ENCODE measurements at regions of chr19 and their contacts with region 1.

Region 1: DNA sequence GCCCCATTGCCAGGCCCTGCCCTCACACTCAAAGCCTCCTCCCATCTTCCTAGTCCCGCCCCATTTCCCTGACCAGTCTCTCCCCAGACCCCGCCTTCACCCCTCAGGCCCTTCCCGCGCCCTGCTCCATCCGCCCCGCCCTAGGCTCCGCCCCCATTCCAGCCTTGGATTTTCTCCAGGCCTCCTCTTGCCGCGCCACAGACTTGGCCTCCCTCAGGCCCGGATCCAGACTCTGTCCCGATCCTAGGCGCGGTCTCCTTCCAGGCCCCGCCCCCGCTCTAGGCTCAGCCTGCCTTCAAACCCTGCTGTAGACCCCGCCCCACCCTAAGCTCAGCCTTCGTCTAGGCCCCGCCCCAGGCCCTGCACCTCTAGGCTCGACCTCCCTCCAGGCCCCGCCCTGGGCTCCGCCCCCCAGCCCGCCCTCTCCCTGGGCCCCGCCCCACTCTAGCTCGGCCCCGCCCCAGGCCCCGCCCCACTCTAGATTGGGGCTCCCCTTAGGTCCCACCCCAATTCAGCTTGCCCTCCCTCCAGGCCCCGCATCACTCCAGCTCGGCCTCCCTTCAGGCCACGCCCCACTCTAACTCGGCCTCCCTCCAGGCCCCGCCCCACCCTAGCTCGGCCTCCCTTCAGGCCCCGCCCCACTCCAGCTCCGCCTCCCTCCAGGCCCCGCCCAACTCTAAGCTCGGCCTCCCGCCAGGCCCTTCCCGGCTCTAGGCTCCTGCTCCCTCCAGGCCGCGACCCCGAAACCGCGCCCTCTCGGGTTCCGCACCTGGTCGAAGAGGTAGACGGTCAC is 18.5 kb downstream of the LMTK3 start:
- DNase-seq: peak; percentile 91 to 97
- H3K4me3 ChIP-seq: peak overlapping the region; percentile 41
- H3K27ac ChIP-seq: peak overlapping the region; percentile 71 to 79
- H3K4me1 ChIP-seq: peaks cover 0 to 7% of the 10 kb centered on the region in 2 donors
- H3K27me3 ChIP-seq: no peaks in the 10 kb centered on the region
- CTCF ChIP-seq: peak in 1 of 4 experiments; percentile 13
- POLR2A ChIP-seq: peak; percentile 57 to 78

Region 2: GRCh38 chr19:48588670-48589399 is 95.7 kb after region 1 on chr19:
- intact Hi-C with region 1: loop called (anchors 10 kb)
- DNase-seq: peak; percentile 82 to 83
- H3K4me3 ChIP-seq: no peak overlapping the region
- H3K27ac ChIP-seq: no peak overlapping the region
- H3K4me1 ChIP-seq: no peaks in the 10 kb centered on the region
- H3K27me3 ChIP-seq: no peaks in the 10 kb centered on the region
- CTCF ChIP-seq: peak; percentile 77 to 90 (median 88)
- POLR2A ChIP-seq: no peak

Region 3: DNA sequence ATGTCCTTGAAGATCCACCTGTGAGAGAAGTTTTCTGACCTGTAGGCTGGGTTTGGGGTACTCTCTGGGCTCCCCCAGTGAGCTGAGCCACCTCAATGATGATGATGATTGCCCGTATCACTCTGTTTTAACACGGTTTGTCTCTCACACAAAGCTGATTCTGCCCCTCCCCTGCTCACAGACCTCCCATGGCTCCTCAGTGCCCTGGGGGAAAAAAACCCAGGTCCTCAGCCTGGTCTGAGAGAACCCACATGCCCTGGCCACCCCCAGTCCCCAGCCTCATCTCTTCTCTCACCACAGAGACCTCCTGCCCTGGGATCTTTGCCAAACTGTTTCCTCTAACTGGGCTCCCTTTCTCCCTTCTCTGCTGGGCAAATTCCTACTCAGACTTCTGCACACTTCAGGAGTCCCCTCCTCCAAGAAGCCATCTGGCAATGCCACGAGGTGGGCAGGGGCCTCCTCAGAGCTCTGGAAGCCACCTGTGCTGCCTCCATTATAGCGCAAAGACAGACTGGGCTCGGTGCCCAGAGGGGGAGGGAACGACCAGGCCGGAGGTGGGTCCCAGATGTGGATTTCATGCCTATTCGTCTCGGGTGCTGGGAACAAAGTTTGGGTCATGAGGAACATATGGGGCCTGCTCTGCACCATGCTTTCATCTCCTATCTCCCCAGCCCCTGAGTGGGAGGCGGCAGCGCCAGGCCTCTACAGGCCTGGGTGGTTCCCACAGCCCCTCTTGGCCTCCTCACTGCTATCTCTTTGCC is 161.4 kb after region 1 on chr19:
- intact Hi-C with region 1: no loop called
- DNase-seq: no peak
- H3K4me3 ChIP-seq: no peak overlapping the region
- H3K27ac ChIP-seq: no peak overlapping the region
- H3K4me1 ChIP-seq: no peaks in the 10 kb centered on the region
- H3K27me3 ChIP-seq: no peaks in the 10 kb centered on the region
- CTCF ChIP-seq: no peak
- POLR2A ChIP-seq: no peak